ENCODE measurements at regions of chr15 and their contacts with region 1.

Region 1: DNA sequence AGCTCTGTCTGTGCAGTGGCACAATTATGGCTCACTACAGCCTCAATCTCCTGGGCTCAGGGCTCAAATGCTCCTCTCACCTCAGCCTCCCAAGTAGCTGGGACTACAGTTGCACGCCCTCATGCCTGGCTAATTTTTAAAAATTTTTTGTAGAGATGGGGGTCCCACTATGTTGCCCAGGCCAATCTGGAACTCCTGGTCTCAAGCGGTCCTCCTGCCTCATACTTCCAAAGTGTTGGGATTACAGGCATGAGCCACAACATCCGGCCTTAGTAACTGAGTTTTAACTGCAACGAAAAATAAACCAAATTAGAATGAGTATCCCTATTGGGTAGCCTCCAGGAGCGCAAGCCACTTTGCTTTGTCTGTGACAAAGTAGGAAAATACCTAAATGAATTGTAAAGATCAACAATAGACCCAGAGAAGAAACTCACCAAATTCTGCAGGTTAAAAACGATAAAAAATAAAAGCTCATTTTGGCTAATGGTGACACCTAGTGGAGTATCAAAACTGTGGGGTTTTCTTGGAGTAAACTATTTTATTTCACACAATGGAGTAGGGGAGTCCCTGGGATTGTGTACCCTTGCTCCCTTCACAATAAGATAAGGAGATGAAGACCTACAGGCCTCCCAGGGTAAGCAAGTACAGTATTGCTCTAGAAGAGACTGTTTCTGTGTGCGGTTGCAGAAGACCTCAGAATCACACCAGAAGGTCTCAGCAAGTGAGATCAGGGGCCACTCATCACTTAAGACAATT is 21.0 kb upstream of the CA12 start:
- DNase-seq: peak; percentile 38

Region 2: GRCh38 chr15:63188926-63189871 is 213.5 kb before region 1 on chr15 and contains the start of gene RAB8B:
- intact Hi-C with region 1: loop called (anchors 10 kb)
- DNase-seq: peak; percentile 99
- total RNA-seq, gene RAB8B: 8.7 TPM

Region 3: GRCh38 chr15:63288778-63289378 is 113.8 kb before region 1 on chr15:
- intact Hi-C with region 1: loop called (anchors 1 kb)
- DNase-seq: no peak